Activated T-helper 1 cell treated with anti-CD3 and anti-CD28 coated beads, Interleukin-12 subunit alpha, Interleukin-12 subunit beta, Interleukin-2, Interleukin-4 antibody, amounts not matched to agents 30 ng/mL and 10 ng/mL and 1 ng/mL, durations not matched to agents 14 hours and 24 hours and 36 hours (primary cell): ENCODE measurements at regions of chr13 and their contacts with region 1.

Region 1: GRCh38 chr13:20773194-20774080 is at the start of gene EEF1AKMT1:
- DNase-seq: peak; percentile 94
- H3K4me3 Mint-ChIP-seq: peak within 1 kb of the TSS; percentile 92
- H3K27ac Mint-ChIP-seq: peak within 1 kb of the TSS; percentile 100
- H3K4me1 Mint-ChIP-seq: peaks cover 29% of the 10 kb centered on the region
- H3K27me3 Mint-ChIP-seq: no peaks in the 10 kb centered on the region
- total RNA-seq, gene EEF1AKMT1: 8.7 and 12.9 TPM in 2 replicates

Region 2: GRCh38 chr13:19863323-19864023 is 910.0 kb before region 1 on chr13 and contains the start of gene ZMYM5:
- intact Hi-C with region 1: loop called (anchors 2 kb)
- DNase-seq: peak; percentile 95
- H3K4me3 Mint-ChIP-seq: peak within 1 kb of the TSS; percentile 99
- H3K27ac Mint-ChIP-seq: peak within 1 kb of the TSS; percentile 97
- H3K4me1 Mint-ChIP-seq: peaks cover 43% of the 10 kb centered on the region
- H3K27me3 Mint-ChIP-seq: peaks cover 3% of the 10 kb centered on the region
- total RNA-seq, gene ZMYM5: 12.2 and 14.2 TPM in 2 replicates

Region 3: DNA sequence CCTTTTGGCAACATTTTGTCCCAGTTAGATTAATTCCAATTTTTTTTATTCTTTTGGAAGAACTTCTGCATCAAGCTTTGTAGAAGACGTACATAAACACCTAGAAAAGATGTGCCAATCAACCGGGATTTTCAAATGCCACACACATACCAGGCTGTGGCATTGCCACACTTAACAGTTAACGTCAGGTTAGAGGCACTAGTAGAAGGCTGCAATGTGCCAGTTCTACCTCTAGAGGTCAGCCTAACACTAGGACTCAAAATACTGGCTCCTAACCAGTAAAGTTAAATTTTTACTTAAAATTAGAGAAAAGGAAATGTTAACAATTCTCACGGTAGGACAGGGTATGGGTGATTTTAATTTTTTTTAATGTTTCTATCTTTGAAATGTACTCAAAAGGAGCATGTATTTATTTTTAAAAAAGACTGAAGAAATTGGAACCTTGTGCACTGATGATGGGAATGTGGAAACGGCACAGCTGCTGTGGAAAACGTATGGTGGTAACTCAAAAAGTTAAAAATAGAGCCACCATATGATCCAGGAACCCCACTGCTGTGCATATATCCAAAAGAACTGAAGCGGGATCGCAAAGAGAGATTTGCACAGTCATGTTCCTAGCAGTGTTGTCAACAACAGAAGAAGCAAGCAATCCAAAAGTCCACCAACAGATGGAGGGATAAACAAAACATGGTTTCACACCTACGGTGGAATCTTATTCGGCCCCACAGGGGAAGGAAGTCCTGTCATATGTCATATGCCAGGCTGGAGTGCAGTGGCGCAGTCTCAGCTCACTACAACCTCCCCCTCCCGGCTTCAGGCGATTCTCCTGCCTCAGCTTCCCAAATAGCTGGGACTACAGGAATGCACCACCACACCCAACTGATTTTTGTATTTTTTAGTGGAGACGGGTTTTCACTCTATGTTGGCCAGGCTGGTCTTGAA is 278.1 kb before region 1 on chr13:
- intact Hi-C with region 1: loop called (anchors 5 kb)
- DNase-seq: peak; percentile 42
- H3K4me3 Mint-ChIP-seq: no peak overlapping the region
- H3K27ac Mint-ChIP-seq: no peak overlapping the region
- H3K4me1 Mint-ChIP-seq: no peaks in the 10 kb centered on the region
- H3K27me3 Mint-ChIP-seq: peaks cover 3% of the 10 kb centered on the region

Region 4: GRCh38 chr13:20566898-20567874 is 206.3 kb before region 1 on chr13 and contains the start of gene IFT88:
- intact Hi-C with region 1: loop called (anchors 1 kb)
- DNase-seq: peak; percentile 85
- H3K4me3 Mint-ChIP-seq: peak within 1 kb of the TSS; percentile 88
- H3K27ac Mint-ChIP-seq: peak within 1 kb of the TSS; percentile 88
- H3K4me1 Mint-ChIP-seq: peaks cover 27% of the 10 kb centered on the region
- H3K27me3 Mint-ChIP-seq: no peaks in the 10 kb centered on the region
- total RNA-seq, gene IFT88: 1.5 TPM in 2 replicates

Region 5: GRCh38 chr13:20828539-20829364 is 55.3 kb after region 1 on chr13:
- intact Hi-C with region 1: loop called (anchors 2 kb)
- DNase-seq: peak; percentile 28
- H3K4me3 Mint-ChIP-seq: no peak overlapping the region
- H3K27ac Mint-ChIP-seq: no peak overlapping the region
- H3K4me1 Mint-ChIP-seq: peaks cover 8% of the 10 kb centered on the region
- H3K27me3 Mint-ChIP-seq: no peaks in the 10 kb centered on the region

Region 6: GRCh38 chr13:21176220-21176982 is 403.0 kb after region 1 on chr13 and contains the starts of genes MRPL57 and SKA3:
- intact Hi-C with region 1: loop called (anchors 1 kb)
- DNase-seq: peak; percentile 95
- H3K4me3 Mint-ChIP-seq: peak within 1 kb of the TSS; percentile 98
- H3K27ac Mint-ChIP-seq: peak within 1 kb of the TSS; percentile 96
- H3K4me1 Mint-ChIP-seq: peaks cover 34% of the 10 kb centered on the region
- H3K27me3 Mint-ChIP-seq: no peaks in the 10 kb centered on the region
- total RNA-seq, gene MRPL57: 31.4 and 33.3 TPM in 2 replicates
- total RNA-seq, gene SKA3: 29.4 and 32.4 TPM in 2 replicates

Region 7: DNA sequence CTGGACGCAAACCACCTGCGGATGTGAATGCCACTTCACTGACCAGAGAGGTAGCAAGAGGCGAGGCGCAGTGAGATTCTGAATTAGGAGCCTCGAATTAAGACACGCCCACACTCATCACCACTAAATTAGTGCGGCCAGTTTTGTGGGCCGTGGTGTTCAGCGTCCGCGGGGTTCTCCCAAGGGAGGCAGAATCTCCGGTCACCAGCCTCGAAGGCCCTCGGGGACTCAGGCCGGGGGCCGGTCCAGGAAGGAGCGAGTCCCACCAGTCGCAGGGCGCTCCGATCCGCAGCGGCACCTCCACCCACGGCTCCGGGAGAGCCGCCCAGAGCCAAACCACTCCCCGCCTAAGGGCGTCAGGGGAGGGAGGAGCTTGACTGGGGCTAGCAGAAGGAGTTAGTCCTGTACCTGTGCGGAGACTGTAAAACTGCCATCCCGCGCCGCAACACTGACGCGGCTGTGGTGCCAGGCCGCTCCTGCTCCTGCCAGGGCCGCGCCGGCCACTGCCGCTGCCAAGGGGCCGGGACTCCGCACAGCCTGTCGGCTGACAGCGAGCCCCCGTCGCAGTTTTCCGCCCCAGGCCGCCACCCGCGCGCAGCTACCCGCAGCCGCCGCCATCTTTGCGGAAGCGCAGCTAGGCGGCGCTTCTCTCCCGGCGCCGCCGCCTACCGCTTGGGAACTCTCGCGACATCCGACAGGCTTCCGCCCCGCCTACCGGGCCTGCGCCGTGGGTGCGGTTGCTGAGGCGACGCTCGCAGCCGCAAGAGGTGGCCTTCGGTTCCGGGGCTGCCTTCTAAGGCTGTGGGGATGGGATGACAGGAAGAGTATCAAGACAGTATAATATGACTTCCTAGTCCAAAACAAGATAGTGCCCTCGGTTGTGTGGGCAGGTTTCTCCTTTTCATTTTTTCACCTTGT is 830.4 kb after region 1 on chr13 and contains the start of gene MICU2:
- intact Hi-C with region 1: loop called (anchors 1 kb)
- DNase-seq: peak; percentile 94
- H3K4me3 Mint-ChIP-seq: peak within 1 kb of the TSS; percentile 85
- H3K27ac Mint-ChIP-seq: peak within 1 kb of the TSS; percentile 88
- H3K4me1 Mint-ChIP-seq: peaks cover 24% of the 10 kb centered on the region
- H3K27me3 Mint-ChIP-seq: peaks cover 24% of the 10 kb centered on the region
- total RNA-seq, gene MICU2: 32.5 and 33.8 TPM in 2 replicates